ENCODE measurements at regions of chr12 and their contacts with region 1.

Region 1: DNA sequence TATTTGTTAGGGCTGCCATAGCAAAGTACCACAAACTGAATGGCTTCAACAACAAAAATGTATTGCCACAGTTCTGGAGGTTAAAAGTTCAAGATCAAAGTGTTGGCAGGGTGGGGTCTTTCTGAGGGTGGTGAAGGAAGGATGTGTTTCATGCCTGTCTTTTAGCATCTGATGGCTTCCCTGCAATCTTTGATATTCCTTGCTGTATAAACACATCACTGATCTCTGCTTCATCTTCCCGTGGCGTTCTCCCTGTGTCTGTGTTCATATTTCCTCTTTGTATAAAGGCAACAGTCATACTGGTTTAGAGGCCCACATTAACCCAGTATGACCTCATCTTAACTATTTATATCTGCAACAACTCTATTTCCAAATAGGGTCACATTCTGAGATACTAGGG is 167.5 kb downstream of the BTG1 start:
- DNase-seq: no peak
- ATAC-seq: no peak
- H3K4me3 ChIP-seq: no peak overlapping the region
- H3K27ac ChIP-seq: no peak overlapping the region
- H3K4me1 ChIP-seq: peaks cover 0 to 28% (median 17%) of the 10 kb centered on the region in 12 donors
- H3K27me3 ChIP-seq: no peaks in the 10 kb centered on the region
- CTCF ChIP-seq: no peak
- POLR2A ChIP-seq: no peak

Region 2: DNA sequence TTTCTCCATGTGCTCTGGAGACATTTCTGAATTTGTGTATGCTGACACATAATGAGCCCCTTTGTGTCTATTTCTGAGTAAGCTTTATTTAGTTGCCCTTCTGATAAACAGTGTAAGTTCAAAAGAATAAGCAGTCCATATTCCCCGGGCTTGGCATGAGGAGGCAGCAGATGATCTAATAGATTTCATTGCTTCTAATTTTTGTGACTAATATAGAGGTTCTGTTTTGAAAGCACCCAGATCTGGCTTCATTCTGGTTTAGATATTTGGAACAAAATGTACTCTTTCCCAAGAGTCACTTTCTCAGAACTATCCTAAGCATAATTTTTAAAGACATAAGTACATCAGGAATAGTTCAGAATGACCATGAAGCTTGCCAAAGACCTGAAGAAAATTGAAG is 123.4 kb before region 1 on chr12:
- intact Hi-C with region 1: loop called in 1 of 10 experiments (anchors 5 kb)
- DNase-seq: no peak
- ATAC-seq: peak in 3 of 4 donors; percentile 24 to 58 (median 36)
- H3K4me3 ChIP-seq: no peak overlapping the region
- H3K27ac ChIP-seq: peak overlapping the region in 2 of 12 donors; percentile 22 to 62
- H3K4me1 ChIP-seq: peaks cover 0 to 15% (median 0%) of the 10 kb centered on the region in 12 donors
- H3K27me3 ChIP-seq: no peaks in the 10 kb centered on the region
- CTCF ChIP-seq: no peak
- POLR2A ChIP-seq: no peak

Region 3: GRCh38 chr12:92745856-92746540 is 767.9 kb after region 1 on chr12:
- intact Hi-C with region 1: no loop called
- DNase-seq: peak; percentile 78 to 90 (median 83)
- ATAC-seq: peak; percentile 86 to 99 (median 98)
- H3K4me3 ChIP-seq: no peak overlapping the region
- H3K27ac ChIP-seq: peak overlapping the region in 11 of 12 donors; percentile 3 to 79 (median 63)
- H3K4me1 ChIP-seq: peaks cover 0 to 20% (median 2%) of the 10 kb centered on the region in 12 donors
- H3K27me3 ChIP-seq: no peaks in the 10 kb centered on the region
- CTCF ChIP-seq: no peak
- POLR2A ChIP-seq: no peak

Measured in heart left ventricle (tissue), 16 donors.